MCF 10A (cell line): ENCODE measurements at regions of chr15 and their contacts with region 1.

Region 1: GRCh38 chr15:92868992-92869988 is 30.8 kb upstream of the CHD2 start:
- DNase-seq: peak; percentile 81
- H3K4me3 Mint-ChIP-seq: peak overlapping the region; percentile 48
- H3K27ac Mint-ChIP-seq: peak overlapping the region; percentile 80
- H3K4me1 Mint-ChIP-seq: peaks cover 24% of the 10 kb centered on the region
- H3K27me3 Mint-ChIP-seq: no peaks in the 10 kb centered on the region
- CTCF ChIP-seq: no peak

Region 2: GRCh38 chr15:92881802-92882696 is 12.8 kb after region 1 on chr15:
- CTCF ChIA-PET with region 1: interaction called, 5 read pairs
- POLR2A ChIA-PET with region 1: interaction called, 235 read pairs
- intact Hi-C with region 1: loop called (anchors 1 kb)
- DNase-seq: peak; percentile 99
- H3K4me3 Mint-ChIP-seq: peak overlapping the region; percentile 87
- H3K27ac Mint-ChIP-seq: peak overlapping the region; percentile 98
- H3K4me1 Mint-ChIP-seq: peaks cover 28% of the 10 kb centered on the region
- H3K27me3 Mint-ChIP-seq: no peaks in the 10 kb centered on the region
- CTCF ChIP-seq: no peak

Region 3: DNA sequence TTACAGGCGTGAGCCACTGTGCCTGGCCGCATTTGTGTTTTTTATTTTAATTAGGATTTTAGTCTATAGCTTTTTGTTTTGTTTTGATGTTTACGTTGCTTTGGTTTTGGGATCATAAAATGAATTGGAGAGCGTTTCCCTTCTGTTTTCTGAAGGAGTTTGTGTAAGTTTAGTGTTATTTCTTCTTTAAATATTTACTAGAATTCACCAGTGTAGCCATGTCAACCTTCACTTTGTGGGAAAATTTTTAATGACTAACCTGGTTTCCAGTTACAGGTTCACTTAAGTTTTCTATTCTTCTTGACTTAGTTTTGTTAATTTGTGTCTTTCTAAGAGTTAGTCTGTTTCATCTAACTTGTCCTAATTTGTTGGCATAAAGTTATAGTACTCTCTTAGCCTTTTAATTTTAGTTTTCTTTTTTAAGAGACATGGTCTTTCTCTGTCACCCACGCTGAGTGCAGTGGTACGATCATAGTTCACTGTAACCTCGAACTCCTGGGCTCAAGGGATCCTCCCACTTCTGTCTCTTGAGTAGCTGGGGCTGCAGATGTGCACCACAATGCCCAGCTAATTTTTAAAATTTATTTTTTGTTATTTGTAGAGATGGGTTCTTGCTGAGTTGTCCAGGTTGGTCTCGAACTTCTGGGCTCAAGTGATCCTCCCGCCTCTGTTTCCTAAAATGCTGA is 91.8 kb after region 1 on chr15:
- CTCF ChIA-PET with region 1: no interaction called
- POLR2A ChIA-PET with region 1: no interaction called
- intact Hi-C with region 1: no loop called
- DNase-seq: no peak
- H3K4me3 Mint-ChIP-seq: no peak overlapping the region
- H3K27ac Mint-ChIP-seq: no peak overlapping the region
- H3K4me1 Mint-ChIP-seq: peaks cover 5% of the 10 kb centered on the region
- H3K27me3 Mint-ChIP-seq: no peaks in the 10 kb centered on the region
- CTCF ChIP-seq: no peak